ENCODE measurements at regions of chr16 and their contacts with region 1.

Region 1: GRCh38 chr16:68093816-68094613 is 8.8 kb downstream of the NFATC3 start:
- DNase-seq: no peak
- ATAC-seq: peak; percentile 89
- H3K4me3 Mint-ChIP-seq: no peak overlapping the region
- H3K27ac Mint-ChIP-seq: 0 out of 2 replicates have a peak overlapping the region, but pooled peaks have one; percentile 34
- H3K4me1 Mint-ChIP-seq: peaks cover 40% of the 10 kb centered on the region
- H3K27me3 Mint-ChIP-seq: no peaks in the 10 kb centered on the region
- CTCF ChIP-seq: no peak; the same call in 1 of the 2 replicates

Region 2: DNA sequence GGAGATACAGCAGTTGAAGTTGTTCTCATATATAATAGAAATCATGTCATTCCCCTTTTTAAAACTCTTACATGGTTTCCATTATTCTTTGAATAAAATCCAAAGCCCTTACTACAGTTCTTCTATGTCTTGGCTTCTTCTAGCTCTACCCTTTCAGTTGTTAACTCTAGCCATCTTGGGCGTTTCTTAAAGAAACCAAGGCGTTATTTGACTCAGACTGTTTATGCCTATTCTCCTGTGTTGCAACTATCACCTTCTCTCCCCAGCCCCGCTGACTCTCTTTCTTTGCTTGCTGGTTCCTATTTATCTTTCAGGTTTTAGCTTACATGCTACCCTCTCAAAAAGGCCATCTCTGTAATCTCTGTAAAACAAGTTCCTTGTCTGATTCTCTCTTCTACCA is 23.9 kb after region 1 on chr16:
- CTCF ChIA-PET with region 1: interaction called, 32 read pairs
- POLR2A ChIA-PET with region 1: no interaction called
- DNase-seq: no peak
- ATAC-seq: no peak
- H3K4me3 Mint-ChIP-seq: no peak overlapping the region
- H3K27ac Mint-ChIP-seq: no peak overlapping the region; the same call in 1 of the 2 replicates
- H3K4me1 Mint-ChIP-seq: peaks cover 3% of the 10 kb centered on the region; the same call in 1 of the 2 replicates
- H3K27me3 Mint-ChIP-seq: no peaks in the 10 kb centered on the region
- CTCF ChIP-seq: no peak

Region 3: GRCh38 chr16:68200088-68200783 is 106.2 kb after region 1 on chr16:
- CTCF ChIA-PET with region 1: interaction called, 15 read pairs
- POLR2A ChIA-PET with region 1: no interaction called
- DNase-seq: no peak
- ATAC-seq: no peak
- H3K4me3 Mint-ChIP-seq: no peak overlapping the region
- H3K27ac Mint-ChIP-seq: peak overlapping the region; percentile 17
- H3K4me1 Mint-ChIP-seq: no peaks in the 10 kb centered on the region
- H3K27me3 Mint-ChIP-seq: no peaks in the 10 kb centered on the region
- CTCF ChIP-seq: no peak

Region 4: GRCh38 chr16:68229431-68230198 is 135.6 kb after region 1 on chr16:
- CTCF ChIA-PET with region 1: interaction called, 46 read pairs
- POLR2A ChIA-PET with region 1: no interaction called
- DNase-seq: peak; percentile 61
- ATAC-seq: peak; percentile 41
- H3K4me3 Mint-ChIP-seq: no peak overlapping the region
- H3K27ac Mint-ChIP-seq: peak overlapping the region; percentile 74
- H3K4me1 Mint-ChIP-seq: peaks cover 17% of the 10 kb centered on the region
- H3K27me3 Mint-ChIP-seq: no peaks in the 10 kb centered on the region
- CTCF ChIP-seq: peak; percentile 76

Region 5: DNA sequence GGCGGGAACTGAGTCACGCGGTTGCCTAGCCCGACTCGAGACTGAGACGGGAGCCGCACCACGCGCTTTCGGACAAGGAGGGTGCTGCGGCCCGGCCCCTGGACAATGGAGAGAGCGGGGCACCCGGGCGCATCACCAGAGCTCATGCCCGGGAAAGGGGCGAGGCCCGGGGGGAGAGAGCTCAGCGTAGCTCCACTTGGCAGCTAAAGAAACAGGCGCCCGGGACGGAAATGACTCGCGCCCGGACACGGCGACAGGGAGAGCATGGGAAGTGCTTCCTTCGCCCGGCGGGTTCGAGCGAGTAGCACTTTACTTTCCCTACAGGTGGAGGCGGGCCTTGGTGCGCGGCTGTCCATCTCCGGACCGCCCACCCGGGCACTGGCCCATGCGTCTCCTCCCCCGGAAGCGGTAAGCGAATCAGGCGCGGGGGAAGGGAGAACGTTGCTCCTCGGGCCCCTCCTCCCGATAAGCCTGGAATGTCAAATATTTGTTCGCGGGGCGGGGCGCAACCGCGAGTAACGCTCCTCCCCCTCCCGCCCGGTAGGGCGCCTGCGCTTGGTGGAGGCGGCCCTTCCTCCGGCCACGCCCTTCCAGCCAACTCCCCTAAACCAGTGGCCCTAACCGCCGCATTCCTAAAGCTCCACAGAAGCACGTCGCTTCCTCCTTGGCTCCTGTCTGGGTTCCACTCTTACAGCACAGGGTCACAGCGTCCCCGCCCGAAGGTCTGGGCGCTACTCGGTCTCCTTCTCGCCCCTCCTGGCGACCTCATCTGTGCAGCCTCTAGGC is 143.4 kb after region 1 on chr16:
- CTCF ChIA-PET with region 1: interaction called, 46 read pairs
- POLR2A ChIA-PET with region 1: no interaction called
- DNase-seq: peak; percentile 99
- ATAC-seq: peak; percentile 79
- H3K4me3 Mint-ChIP-seq: peak overlapping the region; percentile 94
- H3K27ac Mint-ChIP-seq: peak overlapping the region; percentile 98
- H3K4me1 Mint-ChIP-seq: peaks cover 24% of the 10 kb centered on the region
- H3K27me3 Mint-ChIP-seq: peaks cover 14% of the 10 kb centered on the region
- CTCF ChIP-seq: no peak

Measured in WTC11 (cell line).